ENCODE measurements at regions of chr1 and their contacts with region 1.

Region 1: GRCh38 chr1:154558575-154559465 is at the start of gene UBE2Q1:
- DNase-seq: peak; percentile 99 to 100 (median 99)
- H3K4me3 ChIP-seq: peak within 1 kb of the TSS; percentile 94
- H3K27ac ChIP-seq: peak within 1 kb of the TSS; percentile 58 to 75
- H3K4me1 ChIP-seq: peaks cover 9% of the 10 kb centered on the region
- H3K27me3 ChIP-seq: no peaks in the 10 kb centered on the region
- CTCF ChIP-seq: peak in 1 of 3 donors; percentile 24
- EP300 ChIP-seq: peak; percentile 90
- POLR2A ChIP-seq: peak; percentile 22
- total RNA-seq, gene UBE2Q1: 14.3 to 72.4 (median 58.5) TPM

Region 2: DNA sequence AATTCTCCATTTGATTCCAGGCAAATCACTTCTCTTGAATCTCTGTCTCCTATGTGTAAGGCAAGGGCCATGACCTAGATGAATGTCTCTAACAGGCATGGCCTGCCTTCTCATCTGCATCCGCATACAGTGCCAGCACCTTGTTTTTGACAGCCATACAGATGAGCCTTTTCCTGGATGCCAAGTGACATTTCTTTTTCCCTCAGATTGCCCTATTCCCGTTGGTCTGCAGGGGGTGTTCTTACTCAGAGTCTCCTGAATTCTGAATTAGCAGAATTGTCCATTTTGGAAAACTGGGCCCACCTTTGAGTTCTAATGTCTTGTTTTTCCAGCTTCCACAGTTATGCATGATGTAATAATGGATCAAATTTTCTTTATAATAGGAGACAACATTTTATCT is 137.2 kb after region 1 on chr1:
- intact Hi-C with region 1: no loop called
- DNase-seq: no peak
- H3K4me3 ChIP-seq: no peak overlapping the region
- H3K27ac ChIP-seq: no peak overlapping the region
- H3K4me1 ChIP-seq: no peaks in the 10 kb centered on the region
- H3K27me3 ChIP-seq: no peaks in the 10 kb centered on the region
- CTCF ChIP-seq: peak in 1 of 3 donors; percentile 14
- EP300 ChIP-seq: no peak
- POLR2A ChIP-seq: no peak

Region 3: GRCh38 chr1:154760469-154760933 is 201.7 kb after region 1 on chr1:
- intact Hi-C with region 1: loop called in 1 of 4 experiments (anchors 5 kb)
- DNase-seq: peak; percentile 63 to 82 (median 73)
- H3K4me3 ChIP-seq: peak overlapping the region; percentile 32
- H3K27ac ChIP-seq: no peak overlapping the region
- H3K4me1 ChIP-seq: peaks cover 5% of the 10 kb centered on the region
- H3K27me3 ChIP-seq: no peaks in the 10 kb centered on the region
- CTCF ChIP-seq: peak; percentile 60 to 81 (median 72)
- EP300 ChIP-seq: no peak
- POLR2A ChIP-seq: no peak

Region 4: GRCh38 chr1:154791292-154792166 is 232.7 kb after region 1 on chr1:
- intact Hi-C with region 1: no loop called
- DNase-seq: no peak
- H3K4me3 ChIP-seq: no peak overlapping the region
- H3K27ac ChIP-seq: no peak overlapping the region
- H3K4me1 ChIP-seq: no peaks in the 10 kb centered on the region
- H3K27me3 ChIP-seq: no peaks in the 10 kb centered on the region
- CTCF ChIP-seq: no peak
- EP300 ChIP-seq: no peak
- POLR2A ChIP-seq: no peak

Region 5: DNA sequence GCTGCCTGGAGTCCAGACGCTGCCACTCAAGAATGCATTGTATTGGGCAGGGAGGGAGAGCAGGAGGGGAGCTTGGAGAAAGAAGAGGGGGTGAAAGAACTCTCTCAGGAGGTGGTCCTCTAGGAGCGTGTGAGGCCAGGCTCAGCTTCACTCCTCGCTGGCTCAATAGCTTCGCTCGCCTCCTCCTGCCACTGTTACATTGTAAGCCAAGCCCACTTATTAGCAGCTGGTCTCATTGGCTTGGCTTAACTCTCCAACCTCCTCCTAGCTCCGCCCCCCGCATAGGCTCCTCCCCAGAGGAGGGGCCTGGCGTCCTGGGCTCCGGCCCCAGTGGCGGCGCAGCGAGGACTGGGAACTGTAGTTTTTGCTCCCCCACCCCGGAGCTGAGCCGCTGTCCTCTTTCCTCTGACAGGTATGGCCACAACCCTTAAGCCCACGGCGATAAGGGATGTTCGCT is 311.3 kb after region 1 on chr1 and contains the start of gene KCNN3:
- intact Hi-C with region 1: loop called in 2 of 4 experiments (anchors 10 kb)
- DNase-seq: peak; percentile 89 to 96 (median 95)
- H3K4me3 ChIP-seq: peak within 1 kb of the TSS; percentile 36
- H3K27ac ChIP-seq: no peak within 1 kb of the TSS
- H3K4me1 ChIP-seq: peaks cover 8% of the 10 kb centered on the region
- H3K27me3 ChIP-seq: no peaks in the 10 kb centered on the region
- CTCF ChIP-seq: no peak
- EP300 ChIP-seq: no peak
- POLR2A ChIP-seq: no peak
- total RNA-seq, gene KCNN3: 0.71 to 6.0 (median 1.7) TPM

Region 6: DNA sequence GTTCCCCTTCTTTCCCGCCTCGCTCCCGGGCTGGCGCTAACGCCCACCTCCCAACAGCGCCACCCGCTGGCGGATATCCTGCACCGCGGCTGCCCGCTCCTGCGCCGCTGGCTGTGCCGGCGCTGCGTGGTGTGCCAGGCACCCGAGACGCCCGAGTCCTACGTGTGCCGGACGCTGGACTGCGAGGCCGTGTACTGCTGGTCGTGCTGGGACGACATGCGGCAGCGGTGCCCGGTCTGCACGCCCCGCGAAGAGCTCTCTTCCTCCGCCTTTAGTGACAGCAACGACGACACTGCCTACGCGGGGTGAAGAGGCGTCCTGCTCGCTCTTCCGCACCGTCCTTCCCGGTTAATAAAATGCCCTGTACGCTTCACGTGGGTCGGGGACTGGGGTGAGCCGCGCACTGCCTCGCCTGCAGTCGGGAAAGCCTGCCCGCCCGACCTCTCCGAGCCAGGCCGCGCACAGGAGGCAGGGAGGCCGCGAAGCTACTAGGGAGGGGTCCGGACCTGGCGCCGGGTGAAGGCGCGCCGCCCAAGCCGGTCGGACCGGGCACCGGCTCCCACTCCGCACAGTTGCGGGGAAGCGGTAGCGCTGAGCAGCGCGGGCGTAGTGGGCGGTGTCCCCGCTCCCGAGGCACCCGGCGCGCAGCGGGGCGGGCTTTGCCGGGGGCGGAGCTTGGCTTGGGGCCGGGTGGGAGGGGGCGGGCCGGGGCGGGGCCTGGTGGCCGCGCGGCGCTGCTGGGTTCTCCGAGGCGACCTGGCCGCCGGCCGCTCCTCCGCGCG is 491.9 kb after region 1 on chr1 and contains the start of gene ADAM15:
- intact Hi-C with region 1: loop called in 1 of 4 experiments (anchors 10 kb)
- DNase-seq: peak; percentile 73 to 87 (median 84)
- H3K4me3 ChIP-seq: peak within 1 kb of the TSS; percentile 82
- H3K27ac ChIP-seq: peak within 1 kb of the TSS; percentile 33 to 81
- H3K4me1 ChIP-seq: peaks cover 6% of the 10 kb centered on the region
- H3K27me3 ChIP-seq: no peaks in the 10 kb centered on the region
- CTCF ChIP-seq: peak; percentile 40 to 91 (median 78)
- EP300 ChIP-seq: no peak
- POLR2A ChIP-seq: no peak
- total RNA-seq, gene ADAM15: 34.8 to 149 (median 67.8) TPM